ENCODE measurements at regions of chr6 and their contacts with region 1.

Region 1: DNA sequence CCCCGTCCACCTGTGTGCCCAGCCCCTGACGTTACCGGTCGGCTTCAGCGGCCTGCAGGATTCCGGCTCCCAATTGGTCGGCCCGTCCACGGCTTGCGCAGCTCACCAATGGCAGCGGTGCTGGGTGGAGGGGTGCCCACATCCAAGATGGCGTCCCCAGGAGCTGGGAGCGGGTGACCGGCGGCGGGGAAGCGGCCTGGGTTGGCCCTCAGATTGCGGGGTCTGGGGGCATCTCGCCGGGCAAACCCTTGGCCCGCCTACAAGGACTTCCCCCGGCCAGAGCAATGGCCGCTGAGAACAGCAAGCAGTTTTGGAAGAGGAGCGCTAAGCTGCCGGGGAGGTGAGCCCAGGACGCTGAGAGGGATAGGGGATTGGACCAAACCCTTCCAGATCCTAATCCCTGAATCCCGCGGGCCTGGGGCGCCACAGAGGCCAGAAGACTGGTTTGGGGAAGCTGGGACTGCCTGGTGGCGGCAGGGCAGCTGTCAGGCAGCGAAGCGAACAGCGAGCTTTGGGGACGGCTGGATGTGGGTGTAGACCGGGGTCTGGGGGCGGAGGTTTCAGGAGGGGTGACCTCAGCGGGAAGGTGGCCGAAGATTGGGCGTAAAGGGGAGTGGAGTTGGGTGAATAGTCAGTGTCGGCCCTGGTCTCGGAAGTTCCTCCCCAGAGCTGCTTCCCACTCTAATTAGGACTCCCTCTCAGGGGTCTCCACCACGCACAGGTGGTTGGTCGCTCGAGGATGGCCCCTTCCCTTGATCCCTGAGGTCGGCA is at the starts of genes TBC1D22B and TMEM217:
- DNase-seq: peak; percentile 85 to 94 (median 93)
- ATAC-seq: peak; percentile 100
- H3K4me3 ChIP-seq: peak within 1 kb of the TSS; percentile 92
- H3K4me3 Mint-ChIP-seq: peak within 1 kb of the TSS; percentile 80 to 99 (median 90)
- H3K27ac ChIP-seq: peak within 1 kb of the TSS; percentile 87
- H3K27ac Mint-ChIP-seq: peak within 1 kb of the TSS; percentile 71 to 95 (median 88)
- H3K4me1 ChIP-seq: peaks cover 18 to 21% of the 10 kb centered on the region in 2 donors
- H3K4me1 Mint-ChIP-seq: peaks cover 30 to 58% (median 45%) of the 10 kb centered on the region in 7 donors
- H3K27me3 ChIP-seq: no peaks in the 10 kb centered on the region
- H3K27me3 Mint-ChIP-seq: no peaks in the 10 kb centered on the region
- total RNA-seq, gene TBC1D22B: 8.3 to 23.5 (median 9.5) TPM
- total RNA-seq, gene TMEM217: 0.78 to 2.8 (median 1.6) TPM in 3 of 5 experiments, not detected in the others

Region 2: GRCh38 chr6:36938536-36938935 is 319.3 kb before region 1 on chr6:
- CTCF ChIA-PET with region 1: no interaction called
- POLR2A ChIA-PET with region 1: no interaction called
- intact Hi-C with region 1: no loop called
- DNase-seq: no peak
- ATAC-seq: no peak
- H3K4me3 ChIP-seq: no peak overlapping the region
- H3K4me3 Mint-ChIP-seq: no peak overlapping the region
- H3K27ac ChIP-seq: no peak overlapping the region
- H3K27ac Mint-ChIP-seq: no peak overlapping the region
- H3K4me1 ChIP-seq: no peaks in the 10 kb centered on the region
- H3K4me1 Mint-ChIP-seq: peaks cover 0 to 11% (median 0%) of the 10 kb centered on the region in 7 donors
- H3K27me3 ChIP-seq: no peaks in the 10 kb centered on the region
- H3K27me3 Mint-ChIP-seq: peaks cover 4 to 38% (median 10%) of the 10 kb centered on the region in 5 donors

Region 3: GRCh38 chr6:37222125-37222967 is 35.5 kb before region 1 on chr6:
- CTCF ChIA-PET with region 1: no interaction called
- POLR2A ChIA-PET with region 1: interaction called, 3 read pairs
- intact Hi-C with region 1: loop called (anchors 1 kb)
- DNase-seq: peak; percentile 45 to 74 (median 66)
- ATAC-seq: peak; percentile 94
- H3K4me3 ChIP-seq: peak overlapping the region; percentile 60
- H3K4me3 Mint-ChIP-seq: peak overlapping the region; percentile 77 to 91 (median 86)
- H3K27ac ChIP-seq: peak overlapping the region; percentile 47
- H3K27ac Mint-ChIP-seq: peak overlapping the region in 7 of 9 donors; percentile 13 to 76 (median 68)
- H3K4me1 ChIP-seq: peaks cover 4% of the 10 kb centered on the region in 2 donors
- H3K4me1 Mint-ChIP-seq: peaks cover 12 to 38% (median 13%) of the 10 kb centered on the region in 7 donors
- H3K27me3 ChIP-seq: no peaks in the 10 kb centered on the region
- H3K27me3 Mint-ChIP-seq: no peaks in the 10 kb centered on the region

Region 4: GRCh38 chr6:37272834-37273566 is 15.2 kb after region 1 on chr6:
- CTCF ChIA-PET with region 1: interaction called, 3 read pairs
- POLR2A ChIA-PET with region 1: interaction called, 8 read pairs
- intact Hi-C with region 1: loop called (anchors 1 to 2 kb)
- DNase-seq: peak in 1 of 9 donors; percentile 12
- ATAC-seq: peak; percentile 47
- H3K4me3 ChIP-seq: no peak overlapping the region
- H3K4me3 Mint-ChIP-seq: peak overlapping the region in 9 of 10 donors; percentile 45 to 68 (median 58)
- H3K27ac ChIP-seq: no peak overlapping the region
- H3K27ac Mint-ChIP-seq: peak overlapping the region in 6 of 9 donors; percentile 2 to 75 (median 62)
- H3K4me1 ChIP-seq: peaks cover 5 to 11% of the 10 kb centered on the region in 2 donors
- H3K4me1 Mint-ChIP-seq: peaks cover 27 to 80% (median 45%) of the 10 kb centered on the region in 7 donors
- H3K27me3 ChIP-seq: no peaks in the 10 kb centered on the region
- H3K27me3 Mint-ChIP-seq: no peaks in the 10 kb centered on the region

Region 5: GRCh38 chr6:37353761-37354525 is 96.1 kb after region 1 on chr6 and contains the start of gene RNF8:
- CTCF ChIA-PET with region 1: no interaction called
- POLR2A ChIA-PET with region 1: no interaction called
- intact Hi-C with region 1: loop called in 1 of 2 experiments (anchors 5 kb)
- DNase-seq: peak; percentile 72 to 92 (median 84)
- ATAC-seq: peak; percentile 96
- H3K4me3 ChIP-seq: peak within 1 kb of the TSS; percentile 94
- H3K4me3 Mint-ChIP-seq: peak within 1 kb of the TSS; percentile 90 to 98 (median 95)
- H3K27ac ChIP-seq: peak within 1 kb of the TSS; percentile 79
- H3K27ac Mint-ChIP-seq: peak within 1 kb of the TSS; percentile 81 to 93 (median 88)
- H3K4me1 ChIP-seq: peaks cover 7 to 14% of the 10 kb centered on the region in 2 donors
- H3K4me1 Mint-ChIP-seq: peaks cover 21 to 49% (median 37%) of the 10 kb centered on the region in 7 donors
- H3K27me3 ChIP-seq: no peaks in the 10 kb centered on the region
- H3K27me3 Mint-ChIP-seq: no peaks in the 10 kb centered on the region
- total RNA-seq, gene RNF8: 7.1 to 26.0 (median 15.8) TPM

Region 6: GRCh38 chr6:37745748-37746147 is 487.9 kb after region 1 on chr6:
- CTCF ChIA-PET with region 1: no interaction called
- POLR2A ChIA-PET with region 1: no interaction called
- intact Hi-C with region 1: no loop called
- DNase-seq: no peak
- ATAC-seq: no peak
- H3K4me3 ChIP-seq: no peak overlapping the region
- H3K4me3 Mint-ChIP-seq: no peak overlapping the region
- H3K27ac ChIP-seq: no peak overlapping the region
- H3K27ac Mint-ChIP-seq: no peak overlapping the region
- H3K4me1 ChIP-seq: no peaks in the 10 kb centered on the region
- H3K4me1 Mint-ChIP-seq: no peaks in the 10 kb centered on the region
- H3K27me3 ChIP-seq: no peaks in the 10 kb centered on the region
- H3K27me3 Mint-ChIP-seq: peaks cover 5 to 21% (median 10%) of the 10 kb centered on the region in 5 donors

Measured in naive thymus-derived CD4-positive, alpha-beta T cell (primary cell).